CD4-positive, alpha-beta memory T cell (primary cell): ENCODE measurements at regions of chr9 and their contacts with region 1.

Region 1: DNA sequence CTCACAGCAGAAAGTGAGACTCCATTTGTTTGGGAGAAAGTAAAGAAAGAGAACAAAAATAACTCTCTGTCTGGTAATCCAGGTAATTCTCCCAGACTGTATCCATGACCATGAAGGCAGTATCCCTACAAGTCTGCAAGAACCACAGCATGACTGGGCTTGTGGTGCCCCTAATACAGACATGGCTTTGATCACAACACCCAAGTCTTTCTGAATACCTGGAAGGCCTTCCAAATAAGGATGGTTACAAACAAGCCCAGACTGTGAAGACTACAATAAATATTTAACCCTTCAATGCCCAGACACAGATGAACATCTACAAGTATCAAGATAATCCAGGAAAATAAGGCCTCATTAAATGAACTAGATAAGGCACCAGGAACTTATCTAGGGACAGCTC is 481.1 kb upstream of the RORB start:
- DNase-seq: no peak
- H3K4me3 ChIP-seq: no peak overlapping the region
- H3K4me3 Mint-ChIP-seq: no peak overlapping the region
- H3K27ac ChIP-seq: no peak overlapping the region
- H3K27ac Mint-ChIP-seq: no peak overlapping the region
- H3K4me1 ChIP-seq: no peaks in the 10 kb centered on the region
- H3K4me1 Mint-ChIP-seq: no peaks in the 10 kb centered on the region
- H3K27me3 ChIP-seq: no peaks in the 10 kb centered on the region
- H3K27me3 Mint-ChIP-seq: no peaks in the 10 kb centered on the region

Region 2: DNA sequence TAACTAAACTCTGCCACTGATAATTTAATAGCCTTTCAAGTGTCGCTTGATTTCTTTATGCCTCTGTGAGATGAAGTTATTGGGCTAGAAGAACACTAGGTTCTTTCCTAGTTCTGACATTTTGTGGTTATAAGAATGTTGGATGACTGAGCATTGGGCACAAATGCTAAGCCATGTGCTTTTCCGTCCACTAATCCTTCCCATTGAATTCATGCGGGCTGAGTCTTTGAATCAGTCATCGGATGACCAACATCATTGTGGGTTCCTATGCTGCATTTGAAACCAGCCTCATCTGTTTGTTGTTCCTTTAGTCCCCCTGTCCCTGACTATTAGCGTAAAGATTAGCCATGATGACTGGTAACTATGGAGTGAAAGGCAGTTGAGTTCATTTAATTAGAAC is 1121.7 kb before region 1 on chr9:
- CTCF ChIA-PET with region 1: no interaction called
- POLR2A ChIA-PET with region 1: no interaction called
- intact Hi-C with region 1: no loop called
- DNase-seq: no peak
- H3K4me3 ChIP-seq: no peak overlapping the region
- H3K4me3 Mint-ChIP-seq: no peak overlapping the region
- H3K27ac ChIP-seq: no peak overlapping the region
- H3K27ac Mint-ChIP-seq: no peak overlapping the region
- H3K4me1 ChIP-seq: no peaks in the 10 kb centered on the region
- H3K4me1 Mint-ChIP-seq: no peaks in the 10 kb centered on the region
- H3K27me3 ChIP-seq: no peaks in the 10 kb centered on the region
- H3K27me3 Mint-ChIP-seq: peaks cover 4 to 10% of the 10 kb centered on the region in 2 donors

Region 3: DNA sequence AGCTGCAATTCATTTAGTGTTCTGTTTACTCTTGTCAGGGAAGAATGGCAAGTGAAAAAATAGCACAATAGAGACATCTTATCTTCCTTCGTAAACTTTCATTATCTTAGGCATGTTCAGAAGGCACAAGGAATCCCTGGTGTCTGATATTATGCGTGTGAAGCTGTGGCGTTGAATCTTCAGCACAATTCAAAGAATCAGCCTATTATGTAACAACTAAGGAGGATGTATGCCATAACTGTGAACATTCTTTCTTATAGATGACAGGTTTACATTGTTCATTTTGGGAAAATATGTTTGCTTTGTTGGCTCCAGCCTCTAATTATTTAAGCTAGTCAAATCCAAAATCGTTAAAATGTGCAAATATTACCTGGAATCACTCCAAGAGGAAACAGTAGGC is 418.2 kb before region 1 on chr9:
- CTCF ChIA-PET with region 1: no interaction called
- POLR2A ChIA-PET with region 1: no interaction called
- intact Hi-C with region 1: no loop called
- DNase-seq: no peak
- H3K4me3 ChIP-seq: no peak overlapping the region
- H3K4me3 Mint-ChIP-seq: no peak overlapping the region
- H3K27ac ChIP-seq: no peak overlapping the region
- H3K27ac Mint-ChIP-seq: no peak overlapping the region
- H3K4me1 ChIP-seq: no peaks in the 10 kb centered on the region
- H3K4me1 Mint-ChIP-seq: no peaks in the 10 kb centered on the region
- H3K27me3 ChIP-seq: no peaks in the 10 kb centered on the region
- H3K27me3 Mint-ChIP-seq: no peaks in the 10 kb centered on the region

Region 4: GRCh38 chr9:74078647-74079046 is 62.6 kb after region 1 on chr9:
- CTCF ChIA-PET with region 1: no interaction called
- POLR2A ChIA-PET with region 1: no interaction called
- intact Hi-C with region 1: loop called (anchors 10 kb)
- DNase-seq: no peak
- H3K4me3 ChIP-seq: no peak overlapping the region
- H3K4me3 Mint-ChIP-seq: no peak overlapping the region
- H3K27ac ChIP-seq: no peak overlapping the region
- H3K27ac Mint-ChIP-seq: no peak overlapping the region
- H3K4me1 ChIP-seq: no peaks in the 10 kb centered on the region
- H3K4me1 Mint-ChIP-seq: no peaks in the 10 kb centered on the region
- H3K27me3 ChIP-seq: no peaks in the 10 kb centered on the region
- H3K27me3 Mint-ChIP-seq: no peaks in the 10 kb centered on the region